PC-3 (cell line): ENCODE measurements at regions of chr3 and their contacts with region 1.

Region 1: GRCh38 chr3:184712248-184713039 is 580 bp upstream of the MAGEF1 start:
- DNase-seq: no peak
- ATAC-seq: no peak
- H3K4me3 ChIP-seq: peak overlapping the region; percentile 96
- H3K27ac ChIP-seq: peak overlapping the region; percentile 74
- H3K4me1 ChIP-seq: peaks cover 34% of the 10 kb centered on the region
- H3K27me3 ChIP-seq: no peaks in the 10 kb centered on the region
- CTCF ChIP-seq: no peak

Region 2: DNA sequence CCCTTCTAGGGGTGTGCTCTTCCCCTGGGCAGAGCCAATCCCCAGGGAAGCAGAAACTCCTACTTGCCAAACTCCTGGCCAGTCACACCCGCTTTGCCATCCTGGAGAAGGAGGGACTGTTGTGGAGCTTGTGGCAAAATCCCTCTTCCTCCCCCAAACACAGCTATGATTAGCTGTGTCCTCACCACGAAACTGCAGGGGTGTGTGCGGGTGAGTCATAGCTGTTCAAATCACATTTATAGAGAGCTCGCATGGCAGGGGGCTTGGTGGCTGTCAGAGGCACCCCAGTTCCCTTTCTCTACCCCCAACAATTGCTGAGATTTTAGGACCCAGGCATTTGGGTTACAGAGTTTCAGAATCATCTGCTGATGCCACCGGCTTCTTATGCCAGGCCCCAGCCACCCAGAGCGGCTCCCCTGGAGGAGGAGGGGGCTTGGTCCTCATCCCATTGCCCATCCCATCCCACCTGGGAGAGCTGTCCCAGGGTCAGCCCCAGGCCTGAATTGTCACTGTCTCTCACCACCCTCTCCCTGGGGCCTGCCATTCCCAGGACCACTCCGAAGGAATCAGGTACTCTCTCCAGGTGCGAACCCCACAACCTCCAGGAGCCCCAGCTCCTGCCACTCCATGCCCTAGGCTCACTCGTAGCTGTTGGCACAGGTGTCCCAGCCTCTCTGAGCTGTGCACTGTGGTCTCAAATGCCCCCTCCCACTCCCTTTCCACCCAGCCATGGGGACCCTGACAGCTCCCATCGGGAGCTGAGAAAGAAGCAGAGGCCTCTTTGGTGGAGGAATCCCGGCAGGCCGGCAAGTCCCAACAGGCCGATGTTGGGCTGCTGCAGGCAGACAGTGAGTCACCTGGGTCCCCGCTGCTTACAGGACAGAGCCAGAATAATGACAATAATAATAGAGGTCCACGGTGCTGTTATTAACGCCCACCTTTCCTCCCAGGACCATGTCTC is 28.4 kb after region 1 on chr3:
- CTCF ChIA-PET with region 1: no interaction called
- POLR2A ChIA-PET with region 1: interaction called, 10 read pairs
- intact Hi-C with region 1: no loop called
- DNase-seq: peak; percentile 80
- ATAC-seq: peak; percentile 68
- H3K4me3 ChIP-seq: no peak overlapping the region
- H3K27ac ChIP-seq: no peak overlapping the region
- H3K4me1 ChIP-seq: peaks cover 39% of the 10 kb centered on the region
- H3K27me3 ChIP-seq: no peaks in the 10 kb centered on the region
- CTCF ChIP-seq: no peak